Heart left ventricle (tissue), 16 donors: ENCODE measurements at regions of chr7 and their contacts with region 1.

Region 1: DNA sequence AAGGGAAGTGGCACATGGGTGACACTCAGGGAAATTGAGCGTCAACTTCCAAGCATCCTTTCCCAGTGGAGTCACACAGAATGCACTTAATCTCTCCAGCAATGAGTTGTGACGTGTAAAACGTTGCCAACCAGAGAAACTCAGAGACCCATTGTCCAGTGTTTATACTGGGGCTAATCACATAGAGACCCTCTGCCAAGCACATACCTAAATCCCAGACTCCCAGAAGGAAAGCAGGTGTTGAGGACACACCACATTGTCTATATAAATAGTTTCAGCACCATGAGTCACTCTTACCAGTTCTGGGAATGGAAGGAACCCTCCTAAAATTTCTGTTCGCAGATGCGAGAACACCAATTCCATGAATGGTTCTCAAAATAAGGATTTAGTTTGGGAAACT is 76.4 kb upstream of the BET1 start:
- DNase-seq: no peak
- ATAC-seq: no peak
- H3K4me3 ChIP-seq: no peak overlapping the region
- H3K27ac ChIP-seq: no peak overlapping the region
- H3K4me1 ChIP-seq: no peaks in the 10 kb centered on the region
- H3K27me3 ChIP-seq: peaks cover 0 to 4% (median 0%) of the 10 kb centered on the region in 9 donors
- CTCF ChIP-seq: no peak
- POLR2A ChIP-seq: no peak

Region 2: DNA sequence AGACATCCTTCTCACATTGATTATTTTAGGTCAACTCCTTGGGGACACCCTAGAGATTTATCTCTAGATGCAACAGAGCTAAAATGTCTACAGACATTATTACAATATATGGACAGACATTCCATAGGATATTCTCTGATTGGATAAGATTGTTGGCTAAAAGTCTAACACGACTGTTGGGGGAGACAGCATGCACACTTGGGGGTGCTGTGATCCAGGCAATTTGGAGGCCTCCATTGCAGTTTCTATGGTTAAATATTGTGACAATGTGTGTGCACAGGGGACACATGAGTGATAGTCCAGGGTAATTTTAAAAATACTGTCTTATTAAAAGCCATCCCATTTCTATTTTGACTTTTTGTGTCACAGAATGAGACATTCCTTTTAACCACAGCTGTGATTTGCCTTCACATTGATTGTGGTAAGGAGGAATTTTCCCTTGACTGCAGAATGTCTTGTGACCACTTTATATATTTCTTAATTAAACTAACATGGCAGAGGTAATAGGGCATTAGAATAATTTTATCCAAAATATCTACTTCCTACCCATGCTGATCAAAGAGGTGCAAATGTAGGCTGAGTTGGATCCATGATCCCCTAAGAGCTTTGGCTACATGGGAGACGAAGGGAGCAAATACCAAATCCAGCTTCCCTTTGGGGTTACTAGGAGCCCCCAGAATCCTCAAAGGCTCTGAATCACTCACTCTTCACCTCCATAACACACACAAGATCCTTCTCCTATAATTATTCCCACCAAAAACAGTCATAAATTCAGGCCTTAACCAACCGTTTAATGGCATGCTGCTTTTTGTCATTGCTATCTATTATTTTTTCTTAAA is 197.3 kb before region 1 on chr7:
- intact Hi-C with region 1: loop called in 1 of 10 experiments (anchors 5 kb)
- DNase-seq: no peak
- ATAC-seq: no peak
- H3K4me3 ChIP-seq: no peak overlapping the region
- H3K27ac ChIP-seq: no peak overlapping the region
- H3K4me1 ChIP-seq: no peaks in the 10 kb centered on the region
- H3K27me3 ChIP-seq: no peaks in the 10 kb centered on the region
- CTCF ChIP-seq: peak in 3 of 12 donors; percentile 23 to 40 (median 31)
- POLR2A ChIP-seq: no peak

Region 3: DNA sequence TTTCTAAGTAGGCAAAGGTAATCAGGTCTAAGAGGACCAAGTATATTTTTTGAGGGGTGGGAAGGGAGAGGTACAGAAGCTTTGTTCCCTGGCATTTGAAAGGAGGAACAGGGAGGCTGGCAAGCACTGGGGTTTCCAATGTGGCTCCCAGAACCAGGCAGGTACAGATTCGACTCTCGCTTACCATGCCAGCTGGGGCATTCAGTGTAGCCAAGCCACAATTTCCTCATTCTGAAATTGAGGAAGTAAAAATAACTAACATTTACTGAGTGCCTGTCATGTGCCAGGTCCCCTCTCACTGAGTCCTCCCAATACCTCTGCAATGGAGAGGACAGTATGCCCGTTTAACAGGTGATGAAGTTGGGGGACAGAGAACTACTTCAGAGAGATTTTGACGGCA is 30.5 kb before region 1 on chr7:
- intact Hi-C with region 1: no loop called
- DNase-seq: no peak
- ATAC-seq: peak in 1 of 4 donors; percentile 33
- H3K4me3 ChIP-seq: no peak overlapping the region
- H3K27ac ChIP-seq: no peak overlapping the region
- H3K4me1 ChIP-seq: peaks cover 0 to 6% (median 0%) of the 10 kb centered on the region in 12 donors
- H3K27me3 ChIP-seq: no peaks in the 10 kb centered on the region
- CTCF ChIP-seq: no peak
- POLR2A ChIP-seq: no peak

Region 4: GRCh38 chr7:94779070-94779469 is 698.5 kb after region 1 on chr7:
- intact Hi-C with region 1: no loop called
- DNase-seq: no peak
- ATAC-seq: no peak
- H3K4me3 ChIP-seq: no peak overlapping the region
- H3K27ac ChIP-seq: no peak overlapping the region
- H3K4me1 ChIP-seq: peaks cover 0 to 5% (median 0%) of the 10 kb centered on the region in 12 donors
- H3K27me3 ChIP-seq: no peaks in the 10 kb centered on the region
- CTCF ChIP-seq: no peak
- POLR2A ChIP-seq: no peak